PC-9 (cell line): ENCODE measurements at regions of chr2 and their contacts with region 1.

Region 1: DNA sequence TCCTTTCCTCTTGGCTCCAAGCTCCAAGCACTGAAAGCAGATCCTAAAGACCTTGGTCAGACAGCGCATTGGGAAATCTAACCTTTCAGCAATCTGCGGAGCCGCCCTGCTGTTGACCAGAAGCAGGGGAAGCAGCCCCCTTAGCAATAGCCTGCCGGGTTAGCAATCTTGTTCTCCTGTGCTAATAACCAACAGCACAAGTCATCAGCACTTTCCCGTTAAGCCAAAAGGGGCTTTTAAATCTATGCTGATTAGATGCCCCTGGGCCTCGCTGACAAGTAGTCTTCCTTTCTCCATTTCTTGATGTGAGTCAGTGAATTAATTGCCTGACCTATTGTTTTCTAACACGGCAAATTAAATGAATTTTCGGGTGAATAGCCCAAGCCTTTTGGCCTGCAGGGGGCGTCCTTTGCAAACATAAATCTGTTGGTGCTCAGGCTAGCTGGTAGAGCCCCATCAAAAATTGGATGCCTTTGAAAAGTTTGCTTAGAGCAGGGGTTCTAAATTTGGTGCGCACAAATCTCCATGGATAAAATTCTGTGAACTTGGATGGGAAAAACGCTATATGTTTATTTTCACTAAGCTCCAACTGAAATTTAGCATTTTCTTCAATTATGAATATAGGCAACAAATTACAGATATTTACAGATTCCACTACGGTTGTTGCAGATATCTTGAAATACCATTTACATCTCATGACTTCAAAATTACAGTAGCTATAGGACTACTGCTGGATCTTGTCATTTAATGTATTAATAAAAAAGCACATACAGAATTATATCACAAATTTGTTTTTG is 24.6 kb downstream of the MAIP1 start:
- DNase-seq: peak; percentile 71 to 77
- H3K4me3 ChIP-seq: no peak overlapping the region
- H3K27ac ChIP-seq: peak overlapping the region; percentile 21; the same call in 1 of the 2 replicates
- H3K4me1 ChIP-seq: peaks cover 42% of the 10 kb centered on the region
- H3K27me3 ChIP-seq: no peaks in the 10 kb centered on the region
- CTCF ChIP-seq: peak; percentile 92

Region 2: GRCh38 chr2:200279857-200280256 is 299.8 kb after region 1 on chr2:
- CTCF ChIA-PET with region 1: interaction called, 12 read pairs
- POLR2A ChIA-PET with region 1: no interaction called
- intact Hi-C with region 1: no loop called
- DNase-seq: no peak
- H3K4me3 ChIP-seq: no peak overlapping the region
- H3K27ac ChIP-seq: no peak overlapping the region
- H3K4me1 ChIP-seq: no peaks in the 10 kb centered on the region
- H3K27me3 ChIP-seq: no peaks in the 10 kb centered on the region
- CTCF ChIP-seq: no peak

Region 3: GRCh38 chr2:200300648-200301314 is 320.8 kb after region 1 on chr2:
- CTCF ChIA-PET with region 1: interaction called, 3 read pairs
- POLR2A ChIA-PET with region 1: no interaction called
- intact Hi-C with region 1: loop called (anchors 2 kb)
- DNase-seq: peak; percentile 73 to 92
- H3K4me3 ChIP-seq: no peak overlapping the region
- H3K27ac ChIP-seq: peak overlapping the region; percentile 53
- H3K4me1 ChIP-seq: peaks cover 54% of the 10 kb centered on the region
- H3K27me3 ChIP-seq: no peaks in the 10 kb centered on the region
- CTCF ChIP-seq: no peak

Region 4: GRCh38 chr2:200483729-200484198 is 503.7 kb after region 1 on chr2:
- CTCF ChIA-PET with region 1: interaction called, 5 read pairs
- POLR2A ChIA-PET with region 1: interaction called, 4 read pairs
- intact Hi-C with region 1: loop called (anchors 1 kb)
- DNase-seq: peak; percentile 59 to 66
- H3K4me3 ChIP-seq: no peak overlapping the region
- H3K27ac ChIP-seq: no peak overlapping the region
- H3K4me1 ChIP-seq: peaks cover 43% of the 10 kb centered on the region
- H3K27me3 ChIP-seq: no peaks in the 10 kb centered on the region
- CTCF ChIP-seq: peak; percentile 58

Region 5: DNA sequence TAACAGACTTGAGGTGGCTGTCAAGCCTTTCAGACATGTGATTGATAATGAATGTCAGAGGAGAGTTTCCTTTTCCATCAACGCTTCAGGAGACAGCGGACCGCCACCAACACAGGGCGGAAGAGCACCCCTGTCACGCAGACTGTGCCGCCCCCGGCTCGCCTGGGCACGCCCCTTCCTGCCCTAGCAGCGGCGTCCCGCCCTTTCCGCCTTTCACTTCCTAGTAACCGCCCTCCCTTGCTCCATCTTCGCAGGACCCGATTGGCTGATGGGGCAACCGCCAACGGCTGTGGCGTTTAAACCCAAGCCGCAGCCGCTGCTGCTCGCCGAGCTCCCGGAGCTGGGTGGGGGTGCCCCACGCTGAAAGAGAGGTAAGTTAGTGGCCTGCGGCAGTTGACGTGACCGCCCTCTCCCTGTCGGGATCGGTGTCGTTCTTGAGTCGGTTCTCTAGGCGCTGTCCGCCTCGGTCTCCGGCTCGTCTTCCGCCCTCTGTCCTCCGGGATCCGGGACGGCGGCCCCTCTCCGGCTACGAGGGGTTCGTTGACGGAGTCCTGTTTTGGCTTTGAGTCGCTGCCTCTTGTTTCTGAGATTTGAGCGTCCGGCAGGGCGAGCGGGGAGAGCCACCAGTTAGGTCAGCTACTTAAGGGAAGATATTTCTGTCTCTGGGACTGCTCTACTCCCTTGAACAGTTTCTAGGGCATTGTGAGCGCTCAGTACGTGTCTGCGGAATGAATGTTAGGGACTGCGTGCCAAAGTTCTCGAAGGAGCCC is 546.0 kb after region 1 on chr2 and contains the start of gene SGO2:
- CTCF ChIA-PET with region 1: no interaction called
- POLR2A ChIA-PET with region 1: no interaction called
- intact Hi-C with region 1: loop called (anchors 5 kb)
- DNase-seq: peak; percentile 85 to 92
- H3K4me3 ChIP-seq: peak within 1 kb of the TSS; percentile 78
- H3K27ac ChIP-seq: no peak within 1 kb of the TSS
- H3K4me1 ChIP-seq: peaks cover 19% of the 10 kb centered on the region
- H3K27me3 ChIP-seq: no peaks in the 10 kb centered on the region
- CTCF ChIP-seq: no peak
- total RNA-seq, gene SGO2: 17.8 and 25.0 TPM in 2 replicates

Region 6: DNA sequence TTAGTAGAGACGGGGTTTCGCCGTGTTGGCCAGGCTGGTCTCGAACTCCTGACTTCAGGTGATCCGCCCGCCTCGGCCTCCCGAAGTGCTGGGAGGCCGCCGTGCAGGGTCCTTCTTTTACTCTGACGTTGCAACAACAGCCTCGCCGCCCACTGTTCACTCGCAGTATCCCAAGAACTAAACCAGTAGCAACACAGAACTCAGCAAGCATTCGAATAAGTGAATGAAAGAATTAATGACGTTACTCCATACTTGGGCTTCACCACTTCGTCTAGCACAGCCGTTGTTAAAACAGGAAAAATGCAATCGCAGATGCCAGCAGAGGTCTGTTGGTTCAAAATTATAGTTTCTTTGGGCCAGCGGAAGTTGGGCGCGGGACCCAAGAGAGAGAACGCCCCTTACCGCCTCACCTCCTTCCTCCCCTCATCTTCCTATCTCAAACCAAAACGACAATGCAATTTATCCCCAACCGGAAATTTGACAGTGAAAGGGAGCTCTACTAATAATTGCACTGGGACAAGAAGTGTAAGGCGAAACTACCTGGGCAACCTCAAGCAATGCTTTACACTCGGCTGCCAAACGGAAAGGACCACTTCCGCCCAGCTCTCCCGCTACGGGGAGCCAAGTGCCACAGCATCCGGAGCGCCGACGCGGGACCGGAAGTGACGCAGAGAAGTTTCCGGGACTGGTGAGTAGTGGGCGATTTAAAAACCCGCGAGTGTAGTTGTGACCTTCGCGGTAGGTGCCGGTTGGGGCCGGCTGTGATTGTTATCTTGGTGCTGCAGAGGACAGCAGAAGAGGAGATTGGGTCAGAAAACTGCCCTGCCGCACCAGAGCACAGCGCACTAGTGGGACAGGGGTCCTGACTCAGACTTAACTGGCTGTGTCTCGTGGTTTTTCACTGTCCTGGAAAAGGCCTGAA is 908.9 kb after region 1 on chr2 and contains the starts of genes NIF3L1 and PPIL3:
- CTCF ChIA-PET with region 1: no interaction called
- POLR2A ChIA-PET with region 1: no interaction called
- intact Hi-C with region 1: loop called (anchors 10 kb)
- DNase-seq: peak; percentile 93 to 97
- H3K4me3 ChIP-seq: peak within 1 kb of the TSS; percentile 85
- H3K27ac ChIP-seq: peak within 1 kb of the TSS; percentile 96
- H3K4me1 ChIP-seq: peaks cover 14% of the 10 kb centered on the region
- H3K27me3 ChIP-seq: no peaks in the 10 kb centered on the region
- CTCF ChIP-seq: no peak
- total RNA-seq, gene NIF3L1: 27.3 and 45.6 TPM in 2 replicates
- total RNA-seq, gene PPIL3: 41.0 and 49.0 TPM in 2 replicates

Region 7: GRCh38 chr2:201642086-201642578 is 1662.1 kb after region 1 on chr2:
- CTCF ChIA-PET with region 1: no interaction called
- POLR2A ChIA-PET with region 1: no interaction called
- intact Hi-C with region 1: no loop called
- DNase-seq: no peak
- H3K4me3 ChIP-seq: peak overlapping the region; percentile 80
- H3K27ac ChIP-seq: peak overlapping the region; percentile 73
- H3K4me1 ChIP-seq: peaks cover 11% of the 10 kb centered on the region; the same call in 1 of the 2 replicates
- H3K27me3 ChIP-seq: no peaks in the 10 kb centered on the region
- CTCF ChIP-seq: no peak